CD4-positive, alpha-beta memory T cell (primary cell): ENCODE measurements at regions of chr6 and their contacts with region 1.

Region 1: DNA sequence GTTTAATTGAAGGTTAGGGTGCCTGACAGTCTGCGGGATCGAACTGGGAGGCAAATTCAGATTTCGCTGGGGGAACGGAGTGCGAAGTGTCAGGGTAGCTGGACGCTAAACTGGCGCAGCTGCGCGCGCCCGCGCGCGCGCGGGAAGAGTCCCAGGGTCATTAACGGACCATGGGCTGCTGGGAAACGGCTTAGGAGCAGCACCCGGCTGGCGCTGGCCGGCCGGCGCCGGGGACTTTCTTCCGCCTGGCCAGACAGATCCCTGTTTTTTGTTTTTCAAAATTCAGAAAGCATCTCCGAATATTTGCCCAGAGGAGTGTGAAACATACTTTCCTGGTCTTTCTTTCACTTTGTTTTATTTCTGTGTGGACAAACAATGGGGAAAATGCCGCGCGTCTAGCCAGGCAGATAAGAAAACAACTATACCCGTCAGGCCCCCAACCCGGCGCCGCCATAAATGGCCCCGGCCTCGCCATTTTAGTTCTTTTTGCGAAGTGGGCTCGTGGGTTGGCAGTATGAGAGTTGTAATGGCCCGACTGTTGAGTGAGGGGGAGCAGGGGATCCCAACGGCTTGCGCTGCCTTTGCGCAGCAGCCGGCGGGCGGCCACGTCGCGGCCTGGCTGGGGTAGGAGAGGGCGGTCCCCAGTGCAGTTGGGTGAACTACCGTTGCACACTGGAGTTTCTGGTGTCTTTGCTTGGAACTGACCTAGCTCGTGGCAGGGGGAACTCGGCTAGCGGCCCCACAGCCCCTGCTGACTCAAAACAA is 7.1 kb downstream of the HSPA1B start:
- DNase-seq: peak; percentile 80 to 84 (median 81)
- H3K4me3 ChIP-seq: peak overlapping the region; percentile 75 to 88
- H3K4me3 Mint-ChIP-seq: peak overlapping the region; percentile 88 to 99 (median 96)
- H3K27ac ChIP-seq: peak overlapping the region; percentile 88
- H3K27ac Mint-ChIP-seq: peak overlapping the region; percentile 97 to 99 (median 99)
- H3K4me1 ChIP-seq: peaks cover 61% of the 10 kb centered on the region
- H3K4me1 Mint-ChIP-seq: peaks cover 27 to 65% (median 48%) of the 10 kb centered on the region in 4 donors
- H3K27me3 ChIP-seq: no peaks in the 10 kb centered on the region
- H3K27me3 Mint-ChIP-seq: no peaks in the 10 kb centered on the region

Region 2: DNA sequence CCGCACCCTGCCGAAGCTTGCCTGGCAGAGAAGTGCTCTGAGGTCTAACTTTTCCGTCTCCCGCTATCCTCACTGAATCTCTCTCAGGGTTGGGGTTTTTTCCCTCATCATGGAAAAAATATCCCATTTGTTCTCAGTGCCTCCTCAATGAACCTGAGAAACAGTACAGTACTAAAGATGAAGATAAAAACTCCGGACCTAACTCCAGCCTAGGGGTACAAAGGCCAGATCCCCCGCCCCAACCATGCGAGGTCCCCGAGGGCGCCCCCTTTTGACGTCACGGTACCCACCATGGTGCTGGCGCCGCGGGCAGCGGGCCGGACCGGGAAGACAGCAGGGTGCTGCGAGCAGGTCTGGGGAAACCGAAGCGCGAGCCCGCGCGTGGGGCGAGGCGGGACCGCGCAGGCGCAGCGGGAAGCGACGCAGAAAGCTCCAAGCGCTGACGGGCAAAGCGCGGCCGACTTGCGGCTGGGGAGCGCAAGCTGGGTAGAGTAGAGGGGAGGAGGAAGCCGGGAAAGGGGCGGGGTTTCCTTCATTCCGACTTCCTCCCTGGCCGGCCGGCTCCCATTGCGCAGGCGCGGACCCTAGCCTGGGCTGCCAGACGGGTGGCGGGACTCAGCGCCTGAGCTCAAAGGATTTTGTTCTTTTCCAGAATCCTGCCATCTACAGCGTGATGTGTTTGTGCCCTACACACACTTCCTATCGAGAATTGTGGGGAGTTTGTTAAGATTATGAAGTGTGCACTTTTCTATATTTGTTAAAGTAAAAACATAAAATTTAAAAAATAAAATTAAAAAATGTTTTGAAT is 27.9 kb before region 1 on chr6 and contains the start of gene LSM2:
- CTCF ChIA-PET with region 1: interaction called, 10 read pairs
- POLR2A ChIA-PET with region 1: interaction called, 14 read pairs
- intact Hi-C with region 1: no loop called
- DNase-seq: peak; percentile 97 to 98 (median 97)
- H3K4me3 ChIP-seq: peak within 1 kb of the TSS; percentile 84 to 89
- H3K4me3 Mint-ChIP-seq: peak within 1 kb of the TSS; percentile 86 to 97 (median 90)
- H3K27ac ChIP-seq: peak within 1 kb of the TSS; percentile 80
- H3K27ac Mint-ChIP-seq: peak within 1 kb of the TSS; percentile 89 to 97 (median 93)
- H3K4me1 ChIP-seq: peaks cover 23% of the 10 kb centered on the region
- H3K4me1 Mint-ChIP-seq: peaks cover 11 to 37% (median 27%) of the 10 kb centered on the region in 4 donors
- H3K27me3 ChIP-seq: no peaks in the 10 kb centered on the region
- H3K27me3 Mint-ChIP-seq: no peaks in the 10 kb centered on the region
- total RNA-seq, gene LSM2: 30.0 to 34.6 TPM

Region 3: GRCh38 chr6:31822036-31822821 is 12.4 kb before region 1 on chr6:
- CTCF ChIA-PET with region 1: interaction called, 9 read pairs
- POLR2A ChIA-PET with region 1: interaction called, 67 read pairs
- intact Hi-C with region 1: no loop called
- DNase-seq: peak; percentile 71 to 83 (median 73)
- H3K4me3 ChIP-seq: peak overlapping the region; percentile 84 to 96
- H3K4me3 Mint-ChIP-seq: peak overlapping the region; percentile 94 to 98 (median 97)
- H3K27ac ChIP-seq: peak overlapping the region; percentile 74
- H3K27ac Mint-ChIP-seq: peak overlapping the region; percentile 98 to 99 (median 98)
- H3K4me1 ChIP-seq: peaks cover 72% of the 10 kb centered on the region
- H3K4me1 Mint-ChIP-seq: peaks cover 31 to 81% (median 54%) of the 10 kb centered on the region in 4 donors
- H3K27me3 ChIP-seq: no peaks in the 10 kb centered on the region
- H3K27me3 Mint-ChIP-seq: no peaks in the 10 kb centered on the region

Region 4: GRCh38 chr6:31971993-31972708 is 137.5 kb after region 1 on chr6 and contains the start of gene DXO:
- CTCF ChIA-PET with region 1: no interaction called
- POLR2A ChIA-PET with region 1: interaction called, 3 read pairs
- intact Hi-C with region 1: loop called (anchors 10 kb)
- DNase-seq: peak; percentile 99 to 100 (median 99)
- H3K4me3 ChIP-seq: peak within 1 kb of the TSS; percentile 63 to 77
- H3K4me3 Mint-ChIP-seq: peak within 1 kb of the TSS; percentile 97 to 99 (median 98)
- H3K27ac ChIP-seq: peak within 1 kb of the TSS; percentile 99
- H3K27ac Mint-ChIP-seq: peak within 1 kb of the TSS; percentile 100
- H3K4me1 ChIP-seq: peaks cover 31% of the 10 kb centered on the region
- H3K4me1 Mint-ChIP-seq: peaks cover 21 to 58% (median 32%) of the 10 kb centered on the region in 4 donors
- H3K27me3 ChIP-seq: no peaks in the 10 kb centered on the region
- H3K27me3 Mint-ChIP-seq: no peaks in the 10 kb centered on the region
- total RNA-seq, gene DXO: 27.8 to 30.3 TPM